Astrocyte of the cerebellum (primary cell): ENCODE measurements at regions of chr20 and their contacts with region 1.

Region 1: DNA sequence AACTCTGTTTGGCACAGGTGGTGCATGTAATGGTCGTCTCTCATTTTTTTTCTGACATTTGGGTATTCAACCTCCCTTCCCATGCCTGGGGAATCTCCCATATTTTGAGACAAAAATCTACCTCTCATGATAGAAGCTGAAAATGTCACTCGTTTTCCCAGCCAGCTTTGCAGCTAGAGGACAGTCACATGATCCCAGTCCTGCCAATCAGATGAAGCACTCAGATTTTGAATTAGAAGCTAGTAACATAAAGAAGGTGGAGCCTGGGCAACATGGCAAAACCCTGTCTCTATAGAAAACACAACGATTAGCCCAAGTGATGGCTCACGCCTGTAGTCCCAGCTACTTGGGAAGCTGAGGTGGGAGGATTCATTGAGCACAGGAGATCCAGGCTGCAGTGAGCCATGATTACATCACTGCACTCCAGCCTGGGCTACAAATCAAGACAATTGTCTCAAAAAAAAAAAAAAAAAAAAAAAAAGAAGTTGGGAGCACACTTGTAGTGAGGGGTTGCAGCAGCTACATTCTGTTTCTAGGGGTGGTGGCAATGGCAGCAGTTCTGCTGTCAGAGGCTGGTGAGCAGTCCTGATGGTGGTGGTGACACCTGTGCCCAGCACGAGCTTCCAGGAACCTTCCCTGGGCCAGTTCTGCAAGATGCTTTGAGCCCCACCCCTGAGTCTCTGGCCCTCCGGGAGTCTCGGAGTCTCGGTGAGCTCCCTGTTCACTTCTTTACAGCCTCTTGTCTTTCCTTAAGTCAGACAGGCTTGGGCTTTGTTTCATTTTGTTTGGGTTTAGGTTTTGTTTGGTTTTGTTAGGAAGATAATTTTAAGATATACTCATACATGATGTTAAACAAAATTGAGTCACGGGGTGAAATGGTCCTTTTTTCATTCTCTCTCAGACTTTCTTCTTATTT is 94.1 kb upstream of the KCNG1 start:
- DNase-seq: no peak
- H3K4me3 ChIP-seq: no peak overlapping the region
- CTCF ChIP-seq: no peak

Region 2: DNA sequence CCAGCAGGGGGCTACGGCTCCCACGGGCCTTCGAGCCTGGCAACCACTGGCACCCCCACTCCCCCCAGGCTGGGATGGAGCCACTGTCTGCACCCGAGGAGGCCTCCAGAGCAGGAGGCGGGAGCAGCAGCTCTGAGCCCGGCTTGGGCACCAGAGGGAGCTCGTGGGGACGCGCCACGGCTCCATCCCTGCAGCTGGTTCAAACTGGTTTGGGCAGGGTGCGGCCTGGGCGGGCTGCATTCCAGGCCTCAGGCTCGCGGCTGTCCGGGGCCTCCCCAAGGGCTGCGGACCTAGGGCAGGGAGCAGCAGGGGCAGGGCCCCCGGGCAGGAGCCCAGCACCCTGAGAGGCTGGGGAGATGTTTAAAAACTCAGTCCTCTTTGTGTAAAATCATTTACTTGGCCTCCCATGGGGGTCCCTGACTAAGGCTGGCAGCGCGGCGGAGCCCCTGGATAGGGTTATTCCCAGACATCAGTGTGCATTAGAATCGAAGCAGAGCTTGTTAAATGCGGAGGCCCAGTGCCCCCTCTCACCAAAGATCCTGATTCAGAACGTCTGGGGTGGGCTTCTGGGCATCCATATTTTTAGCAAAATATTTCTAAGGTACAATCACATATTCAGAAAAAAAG is 326.3 kb before region 1 on chr20:
- in situ Hi-C with region 1: no loop called
- DNase-seq: peak; percentile 60
- H3K4me3 ChIP-seq: no peak overlapping the region
- CTCF ChIP-seq: peak; percentile 87

Region 3: DNA sequence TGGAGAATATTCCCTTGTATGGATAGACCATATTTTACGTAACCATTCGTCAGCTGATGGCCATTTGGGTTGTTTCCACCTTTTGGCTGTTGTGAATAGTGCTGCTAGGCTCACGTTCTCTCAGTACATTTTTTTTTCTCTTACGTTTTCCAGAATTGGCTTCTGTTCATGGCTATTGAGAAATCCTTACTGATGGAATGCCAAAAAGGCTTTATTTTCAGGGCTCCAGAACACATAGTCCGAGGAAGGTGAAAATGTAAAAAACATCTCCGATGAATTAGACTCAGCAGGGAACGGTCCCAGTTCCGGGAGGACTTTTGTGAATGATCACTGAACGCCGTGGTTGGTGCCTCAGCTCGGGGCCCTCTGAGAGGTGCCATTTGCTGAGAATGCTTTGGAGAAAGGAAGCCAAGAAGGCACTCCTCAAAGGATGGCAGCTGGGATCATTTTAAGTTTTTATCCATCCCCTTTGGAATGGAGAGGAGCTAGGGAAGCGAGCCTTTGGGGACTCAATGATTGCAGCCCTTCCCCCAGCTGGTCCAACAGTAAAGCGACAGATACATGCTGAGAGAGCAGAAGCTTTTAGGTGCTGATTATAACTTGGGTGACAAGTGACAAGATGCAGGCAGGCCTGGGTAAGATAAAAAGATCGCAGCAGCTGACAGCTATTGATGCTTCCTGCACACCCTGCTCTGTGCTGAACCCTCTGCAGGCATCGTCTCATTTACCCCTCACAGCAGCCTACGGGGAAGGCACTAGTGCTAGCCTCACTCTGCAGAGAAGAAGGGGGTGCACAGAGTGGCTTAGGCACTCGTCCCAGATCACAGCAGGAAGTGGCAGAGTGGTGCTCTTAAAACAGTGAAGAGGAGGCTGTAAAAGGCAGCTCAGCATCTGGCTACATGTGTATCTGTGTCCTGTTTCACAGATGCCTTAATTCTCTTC is 39.3 kb after region 1 on chr20:
- in situ Hi-C with region 1: loop called (anchors 5 kb)
- DNase-seq: peak; percentile 55
- H3K4me3 ChIP-seq: no peak overlapping the region
- CTCF ChIP-seq: no peak

Region 4: GRCh38 chr20:51166489-51166888 is 49.5 kb after region 1 on chr20:
- in situ Hi-C with region 1: no loop called
- DNase-seq: no peak
- H3K4me3 ChIP-seq: no peak overlapping the region
- CTCF ChIP-seq: no peak